Uterus (tissue), 4 donors: ENCODE measurements at regions of chr10 and their contacts with region 1.

Region 1: DNA sequence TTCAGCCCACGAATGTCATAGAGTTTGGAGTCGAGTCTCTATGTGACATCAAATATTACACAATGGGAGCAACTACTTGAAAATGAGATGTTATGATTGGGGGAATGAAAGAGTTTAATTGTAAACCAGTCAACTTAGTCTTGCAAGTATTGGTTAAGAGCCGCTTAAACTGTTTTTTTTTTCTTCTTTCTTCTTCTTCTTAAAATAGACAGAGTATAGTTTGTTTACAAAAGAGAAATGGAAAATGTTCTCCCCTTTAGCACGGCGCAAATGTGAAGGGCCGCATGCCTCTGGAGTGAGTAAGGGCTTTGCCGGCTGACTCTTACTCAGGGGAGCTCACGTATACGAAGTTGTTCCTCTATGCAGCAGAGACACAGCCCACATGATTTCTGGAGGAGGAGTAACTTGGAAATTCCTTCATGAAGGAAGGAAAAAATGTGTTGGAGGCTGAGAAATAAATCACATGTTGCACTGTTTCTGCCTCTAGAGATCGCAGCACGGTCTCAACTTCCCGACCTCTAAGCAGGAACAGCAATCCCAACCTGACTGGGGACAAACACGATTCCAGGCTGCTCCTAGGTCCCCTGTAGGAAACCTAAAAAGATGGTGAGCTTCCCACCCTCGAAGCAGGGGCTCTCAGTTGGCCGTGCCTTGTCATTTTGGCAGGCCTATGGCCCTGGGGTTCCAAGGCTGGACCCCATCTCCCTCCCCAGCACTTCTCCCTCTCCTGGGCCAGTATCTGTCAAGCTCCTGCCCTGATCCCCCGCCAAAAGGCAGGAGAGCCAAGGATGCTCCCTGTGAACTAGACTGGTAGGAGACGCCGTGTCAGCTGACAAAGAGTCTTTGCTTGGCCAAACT is 44.8 kb downstream of the MYOF start:
- DNase-seq: peak; percentile 80 to 95
- H3K4me3 ChIP-seq: peak overlapping the region; percentile 10 to 11
- H3K27ac ChIP-seq: peak overlapping the region; percentile 98 to 100
- H3K4me1 ChIP-seq: peaks cover 19 to 20% of the 10 kb centered on the region in 2 donors
- H3K27me3 ChIP-seq: no peaks in the 10 kb centered on the region
- CTCF ChIP-seq: peak in 1 of 4 experiments; percentile 6
- POLR2A ChIP-seq: peak; percentile 37 to 50

Region 2: GRCh38 chr10:93471110-93471651 is 33.9 kb after region 1 on chr10:
- intact Hi-C with region 1: loop called (anchors 5 kb)
- DNase-seq: peak in 1 of 2 donors; percentile 60
- H3K4me3 ChIP-seq: no peak overlapping the region
- H3K27ac ChIP-seq: peak overlapping the region; percentile 88 to 89
- H3K4me1 ChIP-seq: peaks cover 4 to 7% of the 10 kb centered on the region in 2 donors
- H3K27me3 ChIP-seq: no peaks in the 10 kb centered on the region
- CTCF ChIP-seq: no peak
- POLR2A ChIP-seq: no peak